Naive thymus-derived CD8-positive, alpha-beta T cell (primary cell): ENCODE measurements at regions of chr7 and their contacts with region 1.

Region 1: DNA sequence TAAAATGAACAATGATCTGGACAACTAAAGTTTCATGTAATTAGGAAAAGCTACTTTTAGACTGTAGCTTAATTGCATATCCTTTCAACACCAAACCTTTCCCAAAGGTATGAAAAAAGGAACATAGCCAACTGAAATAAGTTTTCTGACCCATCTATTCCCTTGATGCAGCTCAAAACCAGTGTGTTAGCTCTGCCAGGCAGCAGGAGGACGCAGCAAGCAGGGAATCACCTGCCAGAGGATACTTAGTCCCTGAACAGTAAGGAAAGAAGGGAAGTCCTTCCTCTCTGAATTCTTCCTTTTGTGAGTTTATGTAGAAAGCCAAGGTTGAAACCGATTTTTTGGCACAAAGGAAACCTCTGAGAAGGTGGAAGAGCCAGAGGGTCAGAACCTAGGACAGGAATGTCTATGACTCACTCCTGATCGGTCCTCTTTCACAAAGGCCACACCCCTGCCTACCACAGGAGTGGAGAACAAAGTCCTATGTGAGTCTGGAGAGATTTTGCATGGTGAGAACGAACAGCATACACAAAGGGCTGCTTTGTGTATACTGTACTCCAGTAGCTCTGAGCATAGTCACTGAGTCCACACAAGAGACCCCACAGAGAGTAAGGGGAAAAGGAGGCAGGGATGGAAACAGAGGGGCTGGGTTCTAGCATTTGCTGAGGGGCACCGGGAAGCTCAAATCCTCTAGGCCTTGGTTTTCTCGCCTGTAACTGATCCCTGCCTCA is 68.8 kb upstream of the GSDME start:
- DNase-seq: no peak
- ATAC-seq: peak; percentile 9 to 12
- H3K4me3 Mint-ChIP-seq: peak overlapping the region; percentile 46 to 83 (median 71)
- H3K27ac Mint-ChIP-seq: peak overlapping the region; percentile 78 to 93 (median 90)
- H3K4me1 Mint-ChIP-seq: peaks cover 26 to 59% (median 46%) of the 10 kb centered on the region in 4 donors
- H3K27me3 Mint-ChIP-seq: no peaks in the 10 kb centered on the region

Region 2: GRCh38 chr7:24979863-24980533 is 153.9 kb after region 1 on chr7 and contains the start of gene OSBPL3:
- POLR2A ChIA-PET with region 1: interaction called, 27 read pairs
- DNase-seq: peak; percentile 86 to 97 (median 94)
- ATAC-seq: peak; percentile 77 to 81
- H3K4me3 Mint-ChIP-seq: peak within 1 kb of the TSS; percentile 93 to 98 (median 97)
- H3K27ac Mint-ChIP-seq: peak within 1 kb of the TSS; percentile 58 to 96 (median 90)
- H3K4me1 Mint-ChIP-seq: peaks cover 27 to 61% (median 54%) of the 10 kb centered on the region in 4 donors
- H3K27me3 Mint-ChIP-seq: no peaks in the 10 kb centered on the region
- polyA plus RNA-seq, gene OSBPL3: 3.4 to 5.3 (median 5.0) TPM